Activated naive CD4-positive, alpha-beta T cell treated with anti-CD3 and anti-CD28 coated beads for 36 hours (primary cell): ENCODE measurements at regions of chr14 and their contacts with region 1.

Region 1: GRCh38 chr14:88385345-88386101 is at the start of gene SPATA7:
- DNase-seq: peak; percentile 89
- H3K4me3 Mint-ChIP-seq: peak within 1 kb of the TSS; percentile 93
- H3K27ac Mint-ChIP-seq: peak within 1 kb of the TSS; percentile 56
- H3K4me1 Mint-ChIP-seq: peaks cover 9% of the 10 kb centered on the region
- H3K27me3 Mint-ChIP-seq: no peaks in the 10 kb centered on the region
- total RNA-seq, gene SPATA7: 3.3 to 3.5 TPM

Region 2: DNA sequence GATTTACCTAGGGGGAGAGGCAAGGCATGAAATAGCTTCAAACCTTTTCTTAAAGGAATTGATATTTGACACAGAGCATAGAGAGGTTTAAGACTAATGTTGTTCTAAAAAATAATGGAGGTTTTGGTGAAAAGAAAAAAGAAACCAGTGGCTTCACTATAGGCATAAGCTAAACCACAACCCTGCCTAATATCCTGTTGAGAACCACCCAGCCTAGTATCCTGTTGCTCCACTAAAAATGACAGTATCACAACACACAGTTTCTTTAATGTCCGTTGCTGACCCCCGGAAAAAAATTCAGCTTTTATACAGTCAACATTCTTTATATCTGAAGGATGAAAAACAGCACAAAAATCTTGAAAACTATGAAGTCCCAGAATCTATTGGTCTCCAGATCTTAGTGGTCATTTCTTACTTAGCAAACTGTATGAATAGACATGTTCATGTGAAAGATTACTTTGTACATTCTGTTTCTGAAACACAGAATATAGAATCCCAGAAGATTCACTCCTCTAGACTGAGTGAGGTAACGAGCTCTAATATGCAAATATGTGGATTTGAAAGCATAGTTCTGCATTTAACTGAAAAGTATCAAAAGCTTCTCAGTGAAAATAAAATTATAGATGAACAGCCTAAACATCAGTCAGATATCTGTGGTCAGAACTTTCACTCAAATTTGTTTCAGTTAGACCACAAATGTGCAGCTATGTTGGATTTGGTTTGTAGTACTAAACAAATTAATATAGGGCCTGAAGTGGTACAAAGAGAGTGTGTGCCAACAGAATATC is 433.0 kb before region 1 on chr14:
- CTCF ChIA-PET with region 1: no interaction called
- intact Hi-C with region 1: loop called (anchors 10 kb)
- DNase-seq: no peak
- H3K4me3 Mint-ChIP-seq: no peak overlapping the region
- H3K27ac Mint-ChIP-seq: peak overlapping the region; percentile 50
- H3K4me1 Mint-ChIP-seq: peaks cover 18% of the 10 kb centered on the region
- H3K27me3 Mint-ChIP-seq: no peaks in the 10 kb centered on the region

Region 3: DNA sequence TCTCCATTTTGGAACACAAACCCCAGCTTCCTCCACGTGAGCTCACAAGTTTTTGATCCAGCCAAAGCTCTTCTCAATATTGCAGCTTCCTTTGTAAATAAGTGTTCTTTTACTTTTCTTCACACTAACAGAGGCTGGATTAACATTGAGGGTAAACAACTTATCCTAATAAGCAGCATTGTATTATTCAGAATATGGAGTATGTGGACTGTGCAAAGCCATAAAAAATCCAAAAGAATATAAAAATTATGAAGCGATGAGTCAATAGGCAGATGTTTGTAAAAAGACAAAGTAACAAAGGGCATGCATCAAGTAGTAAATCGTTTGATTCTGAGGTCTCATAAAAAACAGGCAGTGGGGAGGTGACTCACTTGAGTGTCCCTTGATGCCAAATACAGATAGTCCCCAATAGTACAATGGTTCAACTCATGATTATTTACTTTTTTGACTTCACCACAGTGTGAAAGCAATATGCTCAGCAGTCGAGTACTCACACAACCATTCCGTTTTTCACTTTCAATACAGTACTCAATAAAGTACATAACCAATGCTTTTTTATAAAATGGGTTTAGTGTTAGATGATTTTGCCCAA is 39.4 kb before region 1 on chr14:
- CTCF ChIA-PET with region 1: no interaction called
- intact Hi-C with region 1: no loop called
- DNase-seq: no peak
- H3K4me3 Mint-ChIP-seq: no peak overlapping the region
- H3K27ac Mint-ChIP-seq: no peak overlapping the region
- H3K4me1 Mint-ChIP-seq: no peaks in the 10 kb centered on the region
- H3K27me3 Mint-ChIP-seq: no peaks in the 10 kb centered on the region

Region 4: DNA sequence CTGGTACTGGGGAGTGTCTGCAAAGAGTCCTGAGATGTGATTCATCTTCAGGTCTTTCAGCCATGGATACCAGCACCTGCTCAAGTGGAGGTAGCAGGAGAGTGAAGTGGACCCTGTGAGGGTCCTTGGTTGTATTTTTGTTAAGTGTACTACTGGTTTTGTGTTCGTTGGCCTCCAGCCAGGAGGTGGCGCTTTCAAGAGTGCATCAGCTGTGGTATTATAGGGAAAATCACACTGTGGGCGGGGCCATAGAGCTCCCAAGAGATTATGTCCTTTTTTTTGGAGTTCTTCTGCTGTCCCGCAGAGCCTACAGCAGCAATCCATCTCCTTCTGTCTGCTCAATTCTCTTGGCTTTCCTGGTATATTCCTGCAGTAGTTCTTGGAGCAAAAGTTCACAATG is 66.7 kb after region 1 on chr14:
- CTCF ChIA-PET with region 1: no interaction called
- intact Hi-C with region 1: no loop called
- DNase-seq: no peak
- H3K4me3 Mint-ChIP-seq: no peak overlapping the region
- H3K27ac Mint-ChIP-seq: no peak overlapping the region
- H3K4me1 Mint-ChIP-seq: no peaks in the 10 kb centered on the region
- H3K27me3 Mint-ChIP-seq: no peaks in the 10 kb centered on the region